ENCODE measurements at regions of chr11 and their contacts with region 1.

Region 1: GRCh38 chr11:94563176-94563847 is 3.9 kb upstream of the PIWIL4 start:
- DNase-seq: no peak
- H3K4me3 ChIP-seq: no peak overlapping the region
- CTCF ChIP-seq: peak; percentile 31

Region 2: GRCh38 chr11:94193288-94193687 is 370.0 kb before region 1 on chr11:
- CTCF ChIA-PET with region 1: no interaction called
- POLR2A ChIA-PET with region 1: no interaction called
- DNase-seq: no peak
- H3K4me3 ChIP-seq: no peak overlapping the region
- CTCF ChIP-seq: no peak

Region 3: GRCh38 chr11:94525546-94526324 is 37.6 kb before region 1 on chr11:
- CTCF ChIA-PET with region 1: interaction called, 40 read pairs
- POLR2A ChIA-PET with region 1: no interaction called
- DNase-seq: no peak
- H3K4me3 ChIP-seq: no peak overlapping the region
- CTCF ChIP-seq: no peak

Region 4: GRCh38 chr11:94705419-94705818 is 142.1 kb after region 1 on chr11:
- CTCF ChIA-PET with region 1: no interaction called
- POLR2A ChIA-PET with region 1: no interaction called
- DNase-seq: no peak
- H3K4me3 ChIP-seq: no peak overlapping the region
- CTCF ChIP-seq: no peak